ENCODE measurements at regions of chr18 and their contacts with region 1.

Region 1: GRCh38 chr18:58541789-58542425 is 87.0 kb downstream of the ALPK2 start:
- DNase-seq: peak; percentile 98
- H3K4me3 ChIP-seq: no peak overlapping the region
- H3K27ac ChIP-seq: peak overlapping the region; percentile 78
- H3K4me1 ChIP-seq: peaks cover 34% of the 10 kb centered on the region
- H3K27me3 ChIP-seq: no peaks in the 10 kb centered on the region
- CTCF ChIP-seq: no peak

Region 2: GRCh38 chr18:58567453-58568196 is 25.7 kb after region 1 on chr18:
- CTCF ChIA-PET with region 1: no interaction called
- dilution Hi-C with region 1: no loop called
- in situ Hi-C with region 1: no loop called
- intact Hi-C with region 1: loop called (anchors 2 kb)
- DNase-seq: peak; percentile 98
- H3K4me3 ChIP-seq: no peak overlapping the region
- H3K27ac ChIP-seq: peak overlapping the region; percentile 74
- H3K4me1 ChIP-seq: peaks cover 22% of the 10 kb centered on the region
- H3K27me3 ChIP-seq: no peaks in the 10 kb centered on the region
- CTCF ChIP-seq: no peak

Region 3: GRCh38 chr18:58584200-58585127 is 42.6 kb after region 1 on chr18:
- CTCF ChIA-PET with region 1: no interaction called
- dilution Hi-C with region 1: loop called (anchors 5 kb)
- in situ Hi-C with region 1: no loop called
- intact Hi-C with region 1: no loop called
- DNase-seq: peak; percentile 60
- H3K4me3 ChIP-seq: no peak overlapping the region
- H3K27ac ChIP-seq: peak overlapping the region; percentile 1
- H3K4me1 ChIP-seq: peaks cover 30% of the 10 kb centered on the region
- H3K27me3 ChIP-seq: no peaks in the 10 kb centered on the region
- CTCF ChIP-seq: peak in 1 of 2 donors; percentile 30

Measured in mammary epithelial cell (primary cell).